CD8-positive, alpha-beta T cell (primary cell): ENCODE measurements at regions of chr2 and their contacts with region 1.

Region 1: DNA sequence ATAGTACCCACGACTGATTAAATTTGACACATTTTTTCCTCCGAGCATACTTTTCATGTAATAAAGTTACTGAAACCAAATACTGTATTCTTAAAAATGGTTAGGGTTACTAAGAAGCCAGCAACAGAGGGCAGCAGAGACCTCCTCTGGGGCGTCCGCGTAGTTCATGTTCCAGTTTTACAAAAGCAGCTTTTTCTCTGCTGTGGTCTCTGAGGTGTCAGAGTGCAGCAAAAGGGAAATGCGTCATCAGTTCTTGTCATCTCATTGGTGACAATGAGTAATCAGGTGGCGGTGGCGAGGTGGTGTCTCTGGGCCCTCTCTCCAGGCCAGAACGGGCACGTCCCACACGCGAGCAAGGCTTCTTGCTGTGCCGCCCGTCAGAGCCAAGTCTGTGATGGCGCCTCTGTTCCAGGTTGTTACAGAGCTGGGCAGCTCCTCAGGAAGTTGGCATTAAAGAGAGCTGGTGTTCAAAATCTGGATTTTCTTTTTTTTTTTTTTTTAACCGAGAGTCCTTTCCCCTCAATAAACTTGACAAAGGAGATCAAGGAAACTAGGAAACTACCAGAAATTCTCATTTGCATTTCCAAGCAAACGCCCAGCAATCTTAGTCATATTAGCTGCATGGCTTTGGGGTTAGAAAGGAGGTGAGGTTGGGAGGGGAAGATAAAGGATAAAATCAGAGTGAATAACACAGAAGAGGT is 98.6 kb upstream of the BZW1 start:
- DNase-seq: peak; percentile 84 to 98 (median 92)
- ATAC-seq: peak; percentile 94
- H3K4me3 ChIP-seq: peak overlapping the region; percentile 5 to 25
- H3K4me3 Mint-ChIP-seq: peak overlapping the region; percentile 68
- H3K27ac ChIP-seq: peak overlapping the region; percentile 75 to 98
- H3K27ac Mint-ChIP-seq: peak overlapping the region; percentile 98
- H3K4me1 ChIP-seq: peaks cover 8% of the 10 kb centered on the region
- H3K4me1 Mint-ChIP-seq: peaks cover 11% of the 10 kb centered on the region
- H3K27me3 ChIP-seq: no peaks in the 10 kb centered on the region
- H3K27me3 Mint-ChIP-seq: peaks cover 3% of the 10 kb centered on the region
- CTCF ChIP-seq: peak; percentile 85

Region 2: DNA sequence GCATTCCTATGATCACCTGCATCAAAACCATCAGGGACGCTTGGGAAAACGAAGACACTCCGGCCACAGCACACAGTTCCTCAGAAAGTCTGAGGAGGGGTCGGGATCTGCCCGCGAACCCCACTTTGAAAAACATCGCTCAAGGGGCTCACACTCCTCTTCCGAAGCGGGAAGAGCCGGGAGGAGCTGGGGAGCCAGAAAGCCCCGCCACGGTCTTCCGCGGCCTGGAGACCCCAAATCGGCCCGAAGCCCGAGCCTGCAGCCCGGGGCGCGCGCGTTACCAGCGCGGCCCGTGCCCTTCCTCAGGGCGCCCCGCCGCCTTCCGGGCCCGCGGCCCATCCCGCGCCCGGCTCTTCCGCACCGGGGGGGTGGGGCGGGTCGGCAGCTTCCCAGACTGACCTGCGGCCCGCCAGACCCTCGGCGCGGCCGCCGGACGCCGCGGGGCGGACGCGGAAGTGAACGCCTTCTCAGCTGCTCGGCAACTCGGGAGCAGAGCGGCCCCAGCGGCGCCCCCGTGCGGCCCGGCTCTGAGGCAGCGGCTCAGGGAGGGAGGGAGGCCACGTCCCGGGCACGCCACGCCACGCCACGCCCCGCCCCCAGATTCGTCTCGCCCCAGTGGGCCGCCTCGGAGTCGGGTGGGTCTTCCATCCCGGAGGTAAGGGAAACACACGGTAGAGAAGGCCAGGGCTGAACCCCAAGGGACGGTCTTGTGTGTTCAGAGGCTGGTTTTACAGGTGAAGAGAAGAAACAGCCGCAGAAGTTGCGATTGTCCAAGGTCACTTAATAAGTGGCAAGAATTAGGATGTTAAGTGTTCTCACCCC is 203.3 kb before region 1 on chr2 and contains the start of gene KCTD18:
- CTCF ChIA-PET with region 1: no interaction called
- POLR2A ChIA-PET with region 1: no interaction called
- intact Hi-C with region 1: loop called (anchors 1 to 5 kb)
- DNase-seq: peak; percentile 83 to 96 (median 93)
- ATAC-seq: peak; percentile 99
- H3K4me3 ChIP-seq: peak within 1 kb of the TSS; percentile 78 to 79
- H3K4me3 Mint-ChIP-seq: peak within 1 kb of the TSS; percentile 91
- H3K27ac ChIP-seq: peak within 1 kb of the TSS; percentile 61 to 71
- H3K27ac Mint-ChIP-seq: peak within 1 kb of the TSS; percentile 93
- H3K4me1 ChIP-seq: peaks cover 25% of the 10 kb centered on the region
- H3K4me1 Mint-ChIP-seq: peaks cover 42% of the 10 kb centered on the region
- H3K27me3 ChIP-seq: peaks cover 0 to 7% of the 10 kb centered on the region in 2 experiments
- H3K27me3 Mint-ChIP-seq: no peaks in the 10 kb centered on the region
- CTCF ChIP-seq: peak; percentile 75
- total RNA-seq, gene KCTD18: 17.9 to 20.4 TPM

Region 3: GRCh38 chr2:200735061-200735460 is 21.9 kb after region 1 on chr2:
- CTCF ChIA-PET with region 1: interaction called, 11 read pairs
- POLR2A ChIA-PET with region 1: interaction called, 4 read pairs
- intact Hi-C with region 1: loop called (anchors 1 to 2 kb)
- DNase-seq: peak in 1 of 9 experiments; percentile 15
- ATAC-seq: no peak
- H3K4me3 ChIP-seq: no peak overlapping the region
- H3K4me3 Mint-ChIP-seq: no peak overlapping the region
- H3K27ac ChIP-seq: no peak overlapping the region
- H3K27ac Mint-ChIP-seq: no peak overlapping the region
- H3K4me1 ChIP-seq: no peaks in the 10 kb centered on the region
- H3K4me1 Mint-ChIP-seq: no peaks in the 10 kb centered on the region
- H3K27me3 ChIP-seq: no peaks in the 10 kb centered on the region
- H3K27me3 Mint-ChIP-seq: peaks cover 5% of the 10 kb centered on the region
- CTCF ChIP-seq: no peak

Region 4: GRCh38 chr2:200888704-200889625 is 175.8 kb after region 1 on chr2 and contains the starts of genes NIF3L1 and PPIL3:
- CTCF ChIA-PET with region 1: interaction called, 3 read pairs
- POLR2A ChIA-PET with region 1: interaction called, 18 read pairs
- intact Hi-C with region 1: loop called (anchors 1 kb)
- DNase-seq: peak; percentile 92 to 99 (median 97)
- ATAC-seq: peak; percentile 70
- H3K4me3 ChIP-seq: peak within 1 kb of the TSS; percentile 77 to 78
- H3K4me3 Mint-ChIP-seq: peak within 1 kb of the TSS; percentile 94
- H3K27ac ChIP-seq: peak within 1 kb of the TSS; percentile 96
- H3K27ac Mint-ChIP-seq: peak within 1 kb of the TSS; percentile 100
- H3K4me1 ChIP-seq: peaks cover 21% of the 10 kb centered on the region
- H3K4me1 Mint-ChIP-seq: peaks cover 55% of the 10 kb centered on the region
- H3K27me3 ChIP-seq: no peaks in the 10 kb centered on the region
- H3K27me3 Mint-ChIP-seq: no peaks in the 10 kb centered on the region
- CTCF ChIP-seq: no peak
- total RNA-seq, gene NIF3L1: 3.8 to 4.9 TPM
- total RNA-seq, gene PPIL3: 48.6 to 51.0 TPM

Region 5: GRCh38 chr2:201064797-201065329 is 351.7 kb after region 1 on chr2:
- CTCF ChIA-PET with region 1: interaction called, 22 read pairs
- POLR2A ChIA-PET with region 1: interaction called, 8 read pairs
- intact Hi-C with region 1: loop called in 1 of 2 experiments (anchors 5 kb)
- DNase-seq: no peak
- ATAC-seq: no peak
- H3K4me3 ChIP-seq: no peak overlapping the region
- H3K4me3 Mint-ChIP-seq: no peak overlapping the region
- H3K27ac ChIP-seq: no peak overlapping the region
- H3K27ac Mint-ChIP-seq: peak overlapping the region; percentile 32
- H3K4me1 ChIP-seq: peaks cover 22% of the 10 kb centered on the region
- H3K4me1 Mint-ChIP-seq: peaks cover 61% of the 10 kb centered on the region
- H3K27me3 ChIP-seq: no peaks in the 10 kb centered on the region
- H3K27me3 Mint-ChIP-seq: no peaks in the 10 kb centered on the region
- CTCF ChIP-seq: no peak

Region 6: GRCh38 chr2:201158111-201158929 is 445.2 kb after region 1 on chr2:
- CTCF ChIA-PET with region 1: interaction called, 3 read pairs
- POLR2A ChIA-PET with region 1: interaction called, 4 read pairs
- intact Hi-C with region 1: loop called in 1 of 2 experiments (anchors 1 kb)
- DNase-seq: peak; percentile 21 to 83 (median 65)
- ATAC-seq: peak; percentile 93
- H3K4me3 ChIP-seq: no peak overlapping the region
- H3K4me3 Mint-ChIP-seq: no peak overlapping the region
- H3K27ac ChIP-seq: peak overlapping the region in 1 of 2 experiments; percentile 68
- H3K27ac Mint-ChIP-seq: peak overlapping the region; percentile 83
- H3K4me1 ChIP-seq: peaks cover 11% of the 10 kb centered on the region
- H3K4me1 Mint-ChIP-seq: peaks cover 18% of the 10 kb centered on the region
- H3K27me3 ChIP-seq: no peaks in the 10 kb centered on the region
- H3K27me3 Mint-ChIP-seq: no peaks in the 10 kb centered on the region
- CTCF ChIP-seq: peak; percentile 54

Region 7: DNA sequence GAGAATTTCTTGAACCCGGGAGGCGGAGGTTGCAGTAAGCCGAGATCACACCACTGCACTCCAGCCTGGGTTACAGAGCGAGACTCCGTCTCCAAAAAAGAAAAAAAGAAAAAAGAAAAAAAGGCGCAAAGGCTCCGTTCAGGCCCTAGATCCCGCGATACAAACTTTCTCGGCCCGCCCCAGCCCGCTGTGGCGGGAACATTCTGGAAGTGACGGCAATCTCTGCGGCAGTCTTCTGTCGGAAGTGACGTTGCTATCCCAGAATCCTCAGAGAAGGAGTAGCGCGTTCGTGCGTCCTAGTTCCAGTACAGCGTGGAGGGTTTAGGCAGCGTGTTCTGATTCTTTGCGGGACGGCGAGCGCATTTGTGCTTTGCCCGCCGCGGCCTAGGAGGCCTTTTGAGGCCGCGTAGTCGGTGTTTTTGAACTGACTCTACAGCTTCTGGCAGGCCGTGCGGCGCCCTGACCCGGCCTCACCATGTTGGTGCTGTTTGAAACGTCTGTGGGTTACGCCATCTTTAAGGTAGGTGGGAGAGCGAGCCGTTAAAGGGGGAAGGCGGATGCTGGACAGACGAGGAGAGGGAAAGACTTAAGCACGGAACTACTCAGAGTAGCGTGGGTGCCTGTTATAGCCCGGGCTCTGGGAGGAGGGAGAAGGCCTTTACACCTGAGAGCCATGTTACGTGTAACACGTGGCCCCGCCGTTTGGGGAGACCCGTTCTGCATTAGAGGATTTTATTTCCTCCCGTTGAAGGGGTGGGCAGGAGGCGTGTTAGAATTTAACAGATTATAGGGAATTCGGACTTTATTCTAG is 1552.5 kb after region 1 on chr2 and contains the start of gene NOP58:
- CTCF ChIA-PET with region 1: no interaction called
- POLR2A ChIA-PET with region 1: no interaction called
- intact Hi-C with region 1: loop called in 1 of 2 experiments (anchors 5 kb)
- DNase-seq: peak; percentile 80 to 97 (median 87)
- ATAC-seq: peak; percentile 75
- H3K4me3 ChIP-seq: peak within 1 kb of the TSS; percentile 80 to 100
- H3K4me3 Mint-ChIP-seq: peak within 1 kb of the TSS; percentile 52
- H3K27ac ChIP-seq: peak within 1 kb of the TSS; percentile 97 to 98
- H3K27ac Mint-ChIP-seq: peak within 1 kb of the TSS; percentile 43
- H3K4me1 ChIP-seq: peaks cover 18% of the 10 kb centered on the region
- H3K4me1 Mint-ChIP-seq: peaks cover 21% of the 10 kb centered on the region
- H3K27me3 ChIP-seq: no peaks in the 10 kb centered on the region
- H3K27me3 Mint-ChIP-seq: no peaks in the 10 kb centered on the region
- CTCF ChIP-seq: no peak
- total RNA-seq, gene NOP58: 345 to 352 TPM